Common myeloid progenitor, CD34-positive (primary cell): ENCODE measurements at regions of chr1 and their contacts with region 1.

Region 1: GRCh38 chr1:152189657-152190442 is 30.8 kb upstream of the RPTN start:
- DNase-seq: peak; percentile 72 to 83 (median 81)
- H3K4me3 ChIP-seq: peak overlapping the region in 1 of 7 experiments; percentile 72
- H3K27ac ChIP-seq: no peak overlapping the region
- H3K4me1 ChIP-seq: peaks cover 2 to 9% (median 8%) of the 10 kb centered on the region in 4 experiments
- H3K27me3 ChIP-seq: peaks cover 0 to 21% (median 3%) of the 10 kb centered on the region in 5 experiments

Region 2: GRCh38 chr1:151945725-151946364 is 244.0 kb before region 1 on chr1:
- CTCF ChIA-PET with region 1: no interaction called
- POLR2A ChIA-PET with region 1: no interaction called
- DNase-seq: peak; percentile 99 to 100 (median 99)
- H3K4me3 ChIP-seq: peak overlapping the region in 1 of 7 experiments; percentile 54
- H3K27ac ChIP-seq: peak overlapping the region; percentile 80 to 93
- H3K4me1 ChIP-seq: peaks cover 2 to 50% (median 26%) of the 10 kb centered on the region in 4 experiments
- H3K27me3 ChIP-seq: no peaks in the 10 kb centered on the region

Region 3: GRCh38 chr1:152047730-152048402 is 142.0 kb before region 1 on chr1:
- CTCF ChIA-PET with region 1: interaction called, 121 read pairs
- POLR2A ChIA-PET with region 1: no interaction called
- DNase-seq: peak; percentile 94 to 99 (median 97)
- H3K4me3 ChIP-seq: peak overlapping the region in 5 of 7 experiments; percentile 1 to 68 (median 48)
- H3K27ac ChIP-seq: peak overlapping the region; percentile 74 to 91
- H3K4me1 ChIP-seq: peaks cover 10 to 55% (median 19%) of the 10 kb centered on the region in 4 experiments
- H3K27me3 ChIP-seq: peaks cover 0 to 3% (median 2%) of the 10 kb centered on the region in 5 experiments

Region 4: DNA sequence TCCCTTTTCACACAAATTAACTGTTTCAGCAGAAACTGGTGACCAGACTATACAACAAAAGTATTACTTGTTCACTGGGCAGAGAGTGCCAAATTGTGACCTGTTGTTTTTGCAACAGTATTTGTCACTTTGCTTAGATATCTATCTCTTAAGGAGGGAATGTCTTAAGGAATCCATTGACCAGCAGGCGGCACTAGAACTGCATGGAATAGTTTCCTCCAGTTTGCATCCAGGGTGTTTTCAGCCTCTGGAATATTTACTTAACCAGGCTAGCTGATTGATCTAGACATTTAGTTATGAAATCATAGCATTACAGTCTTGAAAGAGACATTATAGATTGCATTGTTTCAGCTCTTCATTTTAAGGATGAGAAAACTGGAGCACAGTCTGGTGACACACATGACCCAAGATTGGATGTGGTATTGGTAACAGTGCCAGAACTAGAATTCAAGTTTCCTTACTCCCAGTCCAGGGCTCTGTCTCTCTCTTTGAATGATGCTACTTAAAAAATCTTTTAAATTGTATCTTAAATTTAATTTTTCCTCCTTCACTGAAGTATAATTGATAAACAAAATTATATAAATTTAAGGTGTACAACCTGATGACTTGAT is 47.8 kb before region 1 on chr1:
- CTCF ChIA-PET with region 1: interaction called, 111 read pairs
- POLR2A ChIA-PET with region 1: no interaction called
- DNase-seq: peak; percentile 60 to 74 (median 63)
- H3K4me3 ChIP-seq: no peak overlapping the region
- H3K27ac ChIP-seq: no peak overlapping the region
- H3K4me1 ChIP-seq: no peaks in the 10 kb centered on the region
- H3K27me3 ChIP-seq: peaks cover 0 to 18% (median 9%) of the 10 kb centered on the region in 5 experiments

Region 5: DNA sequence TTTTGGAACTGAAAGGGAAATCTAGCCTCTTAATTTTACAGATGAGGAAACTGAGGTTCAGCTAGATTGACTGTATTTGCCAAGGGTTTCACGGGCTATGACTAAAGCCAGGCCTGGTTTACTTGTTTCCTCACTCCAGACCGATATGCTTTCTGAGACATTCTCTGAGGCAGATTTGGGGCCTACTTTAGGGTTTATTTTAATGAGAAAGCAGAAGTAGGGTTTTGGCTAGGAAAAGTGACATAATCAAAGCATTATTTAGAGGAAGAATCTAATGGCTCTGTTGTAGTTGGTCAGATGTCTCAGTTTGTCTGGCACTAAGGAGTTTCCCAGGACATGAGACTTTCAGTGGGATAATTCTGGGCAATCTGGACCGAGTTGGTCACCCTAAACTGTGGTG is 29.3 kb before region 1 on chr1:
- CTCF ChIA-PET with region 1: interaction called, 191 read pairs
- POLR2A ChIA-PET with region 1: no interaction called
- DNase-seq: peak in 2 of 3 donors; percentile 72 to 75
- H3K4me3 ChIP-seq: no peak overlapping the region
- H3K27ac ChIP-seq: no peak overlapping the region
- H3K4me1 ChIP-seq: peaks cover 5 to 60% (median 16%) of the 10 kb centered on the region in 4 experiments
- H3K27me3 ChIP-seq: no peaks in the 10 kb centered on the region

Region 6: GRCh38 chr1:152167835-152168519 is 21.9 kb before region 1 on chr1:
- CTCF ChIA-PET with region 1: interaction called, 191 read pairs
- POLR2A ChIA-PET with region 1: no interaction called
- DNase-seq: peak; percentile 81 to 94 (median 92)
- H3K4me3 ChIP-seq: no peak overlapping the region
- H3K27ac ChIP-seq: no peak overlapping the region
- H3K4me1 ChIP-seq: peaks cover 9 to 44% (median 28%) of the 10 kb centered on the region in 4 experiments
- H3K27me3 ChIP-seq: no peaks in the 10 kb centered on the region

Region 7: GRCh38 chr1:152237093-152237492 is 47.2 kb after region 1 on chr1:
- CTCF ChIA-PET with region 1: no interaction called
- POLR2A ChIA-PET with region 1: no interaction called
- DNase-seq: no peak
- H3K4me3 ChIP-seq: no peak overlapping the region
- H3K27ac ChIP-seq: no peak overlapping the region
- H3K4me1 ChIP-seq: no peaks in the 10 kb centered on the region
- H3K27me3 ChIP-seq: no peaks in the 10 kb centered on the region

Region 8: GRCh38 chr1:152459596-152460528 is 270.0 kb after region 1 on chr1:
- CTCF ChIA-PET with region 1: interaction called, 59 read pairs
- POLR2A ChIA-PET with region 1: interaction called, 4 read pairs
- DNase-seq: peak; percentile 80 to 86 (median 82)
- H3K4me3 ChIP-seq: peak overlapping the region in 4 of 7 experiments; percentile 5 to 63 (median 46)
- H3K27ac ChIP-seq: peak overlapping the region; percentile 40 to 58
- H3K4me1 ChIP-seq: peaks cover 0 to 8% (median 4%) of the 10 kb centered on the region in 4 experiments
- H3K27me3 ChIP-seq: no peaks in the 10 kb centered on the region